PC-3 (cell line): ENCODE measurements at regions of chr20 and their contacts with region 1.

Region 1: DNA sequence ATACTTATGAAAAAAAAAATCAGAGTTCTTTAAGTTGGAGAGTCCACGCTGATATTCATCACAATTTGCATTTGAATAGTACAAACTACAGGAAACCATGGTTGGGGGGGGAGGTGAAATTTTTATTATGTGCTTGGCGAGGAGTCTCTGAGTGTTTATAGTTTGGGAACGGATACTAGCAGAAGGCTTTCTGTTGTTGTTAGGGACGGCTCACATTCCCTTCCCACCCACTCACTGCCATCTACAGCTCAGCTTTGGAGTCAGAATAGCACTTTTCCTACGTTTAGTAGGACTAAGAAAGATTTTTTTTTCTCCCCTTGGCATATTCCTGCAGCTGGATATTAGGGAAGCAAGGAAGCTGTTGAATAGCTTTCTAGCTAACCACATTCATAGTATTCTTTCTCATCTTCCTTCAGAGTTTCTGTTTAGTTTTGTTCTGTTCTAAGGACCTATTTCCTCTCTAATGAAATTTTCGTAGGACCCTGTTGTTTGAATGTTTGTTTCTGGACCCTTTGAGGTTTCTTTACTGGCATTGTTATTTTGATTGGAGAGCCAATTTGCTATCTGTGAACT is 235.1 kb upstream of the ZNF217 start:
- DNase-seq: peak; percentile 93
- ATAC-seq: peak; percentile 77
- H3K4me3 ChIP-seq: peak overlapping the region; percentile 61
- H3K27ac ChIP-seq: peak overlapping the region; percentile 93
- H3K4me1 ChIP-seq: peaks cover 49% of the 10 kb centered on the region
- H3K27me3 ChIP-seq: no peaks in the 10 kb centered on the region
- CTCF ChIP-seq: peak; percentile 62

Region 2: GRCh38 chr20:53594068-53595017 is 234.4 kb before region 1 on chr20:
- CTCF ChIA-PET with region 1: interaction called, 3 read pairs
- POLR2A ChIA-PET with region 1: interaction called, 5 read pairs
- intact Hi-C with region 1: loop called (anchors 1 kb)
- DNase-seq: peak; percentile 98
- ATAC-seq: peak; percentile 69
- H3K4me3 ChIP-seq: peak overlapping the region; percentile 88
- H3K27ac ChIP-seq: peak overlapping the region; percentile 65
- H3K4me1 ChIP-seq: peaks cover 41% of the 10 kb centered on the region
- H3K27me3 ChIP-seq: no peaks in the 10 kb centered on the region
- CTCF ChIP-seq: no peak

Region 3: GRCh38 chr20:53753880-53754459 is 74.8 kb before region 1 on chr20:
- CTCF ChIA-PET with region 1: interaction called, 3 read pairs
- POLR2A ChIA-PET with region 1: interaction called, 10 read pairs
- intact Hi-C with region 1: loop called (anchors 1 kb)
- DNase-seq: no peak
- ATAC-seq: no peak
- H3K4me3 ChIP-seq: peak overlapping the region; percentile 62; the same call in 1 of the 2 replicates
- H3K27ac ChIP-seq: peak overlapping the region; percentile 88
- H3K4me1 ChIP-seq: peaks cover 54% of the 10 kb centered on the region
- H3K27me3 ChIP-seq: no peaks in the 10 kb centered on the region
- CTCF ChIP-seq: no peak

Region 4: DNA sequence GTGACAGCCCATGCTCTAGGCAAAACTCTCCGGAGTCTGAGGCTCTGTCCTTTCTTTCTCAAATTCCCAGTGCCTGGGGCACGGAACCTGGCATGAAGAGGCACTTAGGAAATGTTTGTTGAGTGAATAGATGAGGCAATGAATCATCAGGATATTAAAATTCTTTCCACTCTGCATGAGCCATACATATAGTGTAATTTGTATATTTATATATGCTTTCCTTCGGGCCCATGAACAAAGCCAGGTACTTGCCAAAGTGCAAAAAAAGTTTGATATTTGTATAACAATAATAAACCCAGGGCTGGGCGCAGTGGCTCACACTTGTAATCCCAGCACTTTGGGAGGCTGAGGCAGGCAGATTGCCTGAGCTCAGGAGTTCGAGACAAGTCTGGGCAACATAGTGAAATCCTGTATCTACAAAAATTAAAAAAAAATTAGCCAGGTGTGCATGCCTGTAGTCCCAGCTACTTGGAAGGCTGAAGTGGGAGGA is 22.8 kb before region 1 on chr20:
- CTCF ChIA-PET with region 1: no interaction called
- POLR2A ChIA-PET with region 1: interaction called, 3 read pairs
- intact Hi-C with region 1: loop called (anchors 1 kb)
- DNase-seq: peak; percentile 100
- ATAC-seq: peak; percentile 82
- H3K4me3 ChIP-seq: no peak overlapping the region
- H3K27ac ChIP-seq: peak overlapping the region; percentile 89
- H3K4me1 ChIP-seq: peaks cover 50% of the 10 kb centered on the region
- H3K27me3 ChIP-seq: no peaks in the 10 kb centered on the region
- CTCF ChIP-seq: no peak

Region 5: GRCh38 chr20:53915446-53916172 is 86.8 kb after region 1 on chr20:
- CTCF ChIA-PET with region 1: interaction called, 6 read pairs
- POLR2A ChIA-PET with region 1: interaction called, 4 read pairs
- intact Hi-C with region 1: loop called (anchors 1 kb)
- DNase-seq: peak; percentile 100
- ATAC-seq: peak; percentile 88
- H3K4me3 ChIP-seq: peak overlapping the region; percentile 72
- H3K27ac ChIP-seq: peak overlapping the region; percentile 84
- H3K4me1 ChIP-seq: peaks cover 48% of the 10 kb centered on the region
- H3K27me3 ChIP-seq: no peaks in the 10 kb centered on the region
- CTCF ChIP-seq: peak; percentile 99